HepG2 (cell line): ENCODE measurements at regions of chr4 and their contacts with region 1.

Region 1: GRCh38 chr4:1746265-1746691 is 25.0 kb downstream of the TACC3 start:
- DNase-seq: peak; percentile 82
- ATAC-seq: peak; percentile 78
- H3K4me3 ChIP-seq: peak overlapping the region; percentile 46 to 75 (median 67)
- H3K27ac ChIP-seq: peak overlapping the region; percentile 76
- H3K4me1 ChIP-seq: peaks cover 68% of the 10 kb centered on the region
- H3K27me3 ChIP-seq: no peaks in the 10 kb centered on the region; a peak in 1 of 5 replicates
- CTCF ChIP-seq: peak; percentile 99
- EP300 ChIP-seq: peak in 1 of 2 experiments; percentile 10; a peak in 1 of 4 replicates
- POLR2A ChIP-seq: no peak
- RAD21 ChIP-seq: peak; percentile 94

Region 2: DNA sequence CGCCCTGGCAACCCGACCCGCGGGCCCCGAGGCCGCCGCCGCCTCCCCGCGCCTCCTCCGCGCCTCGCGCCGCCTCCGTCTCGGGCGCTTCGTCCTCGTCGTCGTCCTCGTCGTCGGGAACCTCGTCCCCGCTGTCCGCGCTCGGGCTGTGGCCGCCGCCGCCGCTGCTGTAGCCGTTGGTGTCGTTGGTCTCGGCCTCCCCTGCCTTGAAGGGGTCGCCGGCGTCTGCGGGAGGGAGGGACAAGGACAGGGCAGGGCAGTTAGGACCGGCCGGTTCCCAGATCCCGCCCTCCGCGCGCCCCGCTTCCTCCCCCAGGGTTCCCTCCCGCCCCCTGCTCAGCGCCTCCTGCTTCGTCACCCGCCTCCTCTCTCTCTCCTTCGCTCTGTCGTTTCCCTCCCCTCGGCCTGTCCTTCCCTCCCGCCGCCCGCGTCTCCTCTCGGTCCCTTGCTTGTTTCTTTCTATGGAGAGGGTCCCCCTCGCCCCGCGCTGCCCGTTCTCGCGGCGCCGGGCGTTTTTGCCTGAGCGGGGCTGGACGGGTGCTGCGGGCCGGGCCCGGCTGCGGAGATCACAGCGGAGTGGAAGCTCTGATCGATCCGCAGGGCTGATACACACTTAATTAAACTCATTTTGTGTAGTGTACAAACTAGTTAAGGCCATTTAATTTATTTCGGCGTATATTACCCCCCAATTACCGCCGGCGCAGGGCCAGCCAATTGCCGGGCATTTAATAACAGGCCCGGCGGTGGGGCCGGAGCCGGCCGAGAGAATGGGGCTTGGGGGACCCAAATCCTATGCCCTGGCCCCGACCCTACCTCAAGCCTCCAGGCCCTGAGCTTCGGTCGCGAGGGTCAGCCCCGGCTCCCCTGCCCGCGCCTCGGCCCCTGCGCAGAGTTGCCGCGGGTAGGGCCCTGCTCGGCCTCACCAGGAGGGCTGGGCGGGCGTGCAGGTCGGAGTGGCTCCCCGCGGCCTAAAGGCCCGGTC is 342.4 kb before region 1 on chr4:
- CTCF ChIA-PET with region 1: no interaction called
- POLR2A ChIA-PET with region 1: no interaction called
- in situ Hi-C with region 1: no loop called
- intact Hi-C with region 1: no loop called
- DNase-seq: no peak
- ATAC-seq: no peak
- H3K4me3 ChIP-seq: no peak overlapping the region
- H3K27ac ChIP-seq: no peak overlapping the region
- H3K4me1 ChIP-seq: no peaks in the 10 kb centered on the region
- H3K27me3 ChIP-seq: peaks cover 4 to 27% of the 10 kb centered on the region in 2 experiments
- CTCF ChIP-seq: no peak
- EP300 ChIP-seq: no peak
- POLR2A ChIP-seq: no peak
- RAD21 ChIP-seq: no peak

Region 3: GRCh38 chr4:1767770-1768366 is 21.6 kb after region 1 on chr4:
- CTCF ChIA-PET with region 1: interaction called, 6 read pairs
- POLR2A ChIA-PET with region 1: interaction called, 70 read pairs
- in situ Hi-C with region 1: no loop called
- intact Hi-C with region 1: loop called (anchors 2 kb)
- DNase-seq: peak; percentile 76
- ATAC-seq: peak; percentile 20
- H3K4me3 ChIP-seq: peak overlapping the region; percentile 51 to 67 (median 59)
- H3K27ac ChIP-seq: peak overlapping the region; percentile 83
- H3K4me1 ChIP-seq: peaks cover 83% of the 10 kb centered on the region
- H3K27me3 ChIP-seq: no peaks in the 10 kb centered on the region
- CTCF ChIP-seq: peak; percentile 71
- EP300 ChIP-seq: no peak
- POLR2A ChIP-seq: no peak
- RAD21 ChIP-seq: no peak; the same call in 1 of the 2 replicates

Region 4: DNA sequence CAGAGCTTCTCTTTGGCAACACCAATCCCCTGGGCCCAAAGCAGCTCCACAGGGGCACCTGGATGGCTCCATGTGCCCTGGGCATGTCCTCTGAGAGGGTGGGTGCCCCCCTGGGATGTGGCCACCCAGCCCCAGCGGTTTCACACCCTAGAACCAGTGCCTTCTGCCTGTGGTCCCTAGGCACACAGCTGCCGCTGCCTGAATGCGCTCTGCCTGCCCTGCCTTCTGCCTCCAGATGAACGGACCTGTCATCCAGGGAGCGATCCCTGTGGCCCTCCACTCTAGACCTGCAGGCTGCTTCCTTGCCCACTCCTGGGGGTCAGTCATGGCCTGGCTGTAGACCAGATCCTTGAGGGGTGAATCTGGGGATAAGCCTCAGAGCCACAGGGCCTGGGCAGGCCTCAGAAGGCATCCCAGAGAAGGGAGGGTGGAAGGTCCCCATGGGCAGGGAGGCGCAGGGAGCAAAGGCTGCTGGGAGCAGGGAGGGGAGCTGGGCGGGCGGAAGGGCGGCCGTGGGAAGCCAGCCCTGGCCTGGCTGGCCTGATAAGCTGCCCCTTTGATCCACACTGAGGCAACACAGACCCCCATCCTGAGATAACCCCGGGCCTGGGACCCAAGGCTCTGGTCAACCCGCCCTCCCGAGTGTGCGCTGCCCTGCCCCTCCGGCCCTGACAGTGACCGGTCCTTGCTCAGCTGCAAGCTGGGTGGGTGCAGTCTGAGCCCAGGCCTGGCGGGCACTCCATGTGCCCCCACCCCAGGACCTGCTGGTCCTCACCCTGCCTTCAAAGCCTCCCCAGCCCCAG is 38.7 kb after region 1 on chr4:
- CTCF ChIA-PET with region 1: interaction called, 3 read pairs
- POLR2A ChIA-PET with region 1: interaction called, 19 read pairs
- in situ Hi-C with region 1: no loop called
- intact Hi-C with region 1: no loop called
- DNase-seq: peak; percentile 79
- ATAC-seq: peak; percentile 76
- H3K4me3 ChIP-seq: peak overlapping the region; percentile 29 to 62 (median 29); a peak in 5 of 6 replicates
- H3K27ac ChIP-seq: peak overlapping the region; percentile 69
- H3K4me1 ChIP-seq: peaks cover 96% of the 10 kb centered on the region
- H3K27me3 ChIP-seq: peaks cover 2% of the 10 kb centered on the region in 2 experiments; a peak in 3 of 5 replicates
- CTCF ChIP-seq: no peak
- EP300 ChIP-seq: peak in 1 of 2 experiments; percentile 85; a peak in 1 of 4 replicates
- POLR2A ChIP-seq: no peak
- RAD21 ChIP-seq: no peak

Region 5: GRCh38 chr4:1792832-1793495 is 46.7 kb after region 1 on chr4 and contains the start of gene FGFR3:
- CTCF ChIA-PET with region 1: interaction called, 3 read pairs
- POLR2A ChIA-PET with region 1: interaction called, 48 read pairs
- in situ Hi-C with region 1: no loop called
- intact Hi-C with region 1: loop called (anchors 5 kb)
- DNase-seq: peak; percentile 48
- ATAC-seq: peak; percentile 31
- H3K4me3 ChIP-seq: peak within 1 kb of the TSS; percentile 94 to 98 (median 95)
- H3K27ac ChIP-seq: peak within 1 kb of the TSS; percentile 92
- H3K4me1 ChIP-seq: peaks cover 71% of the 10 kb centered on the region
- H3K27me3 ChIP-seq: peaks cover 8 to 22% of the 10 kb centered on the region in 2 experiments; a peak in 4 of 5 replicates
- CTCF ChIP-seq: no peak
- EP300 ChIP-seq: no peak
- POLR2A ChIP-seq: peak in 1 of 2 experiments; percentile 82; a peak in 2 of 4 replicates
- RAD21 ChIP-seq: peak; percentile 30; the same call in 1 of the 2 replicates
- total RNA-seq, gene FGFR3: 40.2 and 103 TPM in 2 replicates

Region 6: GRCh38 chr4:1899149-1900086 is 153.1 kb after region 1 on chr4:
- CTCF ChIA-PET with region 1: interaction called, 8 read pairs
- POLR2A ChIA-PET with region 1: no interaction called
- in situ Hi-C with region 1: no loop called
- intact Hi-C with region 1: loop called (anchors 1 kb)
- DNase-seq: peak; percentile 70
- ATAC-seq: peak; percentile 93
- H3K4me3 ChIP-seq: no peak overlapping the region
- H3K27ac ChIP-seq: no peak overlapping the region
- H3K4me1 ChIP-seq: peaks cover 53% of the 10 kb centered on the region
- H3K27me3 ChIP-seq: no peaks in the 10 kb centered on the region
- CTCF ChIP-seq: peak; percentile 93
- EP300 ChIP-seq: no peak
- POLR2A ChIP-seq: no peak
- RAD21 ChIP-seq: peak; percentile 92

Region 7: DNA sequence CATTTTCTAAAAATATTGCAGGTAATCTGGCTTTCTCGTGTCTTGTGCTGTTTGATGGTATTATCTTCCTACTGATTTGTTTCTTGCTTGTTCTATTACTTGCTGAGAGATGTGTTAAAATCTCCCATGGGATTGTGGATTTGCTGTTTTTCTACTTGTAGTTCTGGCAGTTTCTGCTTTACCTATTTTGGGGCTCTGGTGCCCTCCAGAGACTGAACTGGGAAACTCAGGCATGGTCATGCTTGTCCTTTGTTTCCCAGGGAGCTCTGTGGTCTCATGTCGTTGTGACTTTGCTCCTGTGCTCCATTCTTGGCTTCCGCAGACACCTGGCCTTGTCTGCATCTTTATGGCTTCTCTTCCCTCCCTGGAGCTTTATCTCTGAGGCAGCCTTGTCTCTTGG is 164.4 kb after region 1 on chr4:
- CTCF ChIA-PET with region 1: no interaction called
- POLR2A ChIA-PET with region 1: interaction called, 4 read pairs
- in situ Hi-C with region 1: no loop called
- intact Hi-C with region 1: loop called (anchors 5 kb)
- DNase-seq: peak; percentile 55
- ATAC-seq: peak; percentile 88
- H3K4me3 ChIP-seq: no peak overlapping the region
- H3K27ac ChIP-seq: no peak overlapping the region
- H3K4me1 ChIP-seq: no peaks in the 10 kb centered on the region
- H3K27me3 ChIP-seq: no peaks in the 10 kb centered on the region
- CTCF ChIP-seq: peak; percentile 75
- EP300 ChIP-seq: no peak
- POLR2A ChIP-seq: no peak
- RAD21 ChIP-seq: peak; percentile 49; the same call in 1 of the 2 replicates

Region 8: DNA sequence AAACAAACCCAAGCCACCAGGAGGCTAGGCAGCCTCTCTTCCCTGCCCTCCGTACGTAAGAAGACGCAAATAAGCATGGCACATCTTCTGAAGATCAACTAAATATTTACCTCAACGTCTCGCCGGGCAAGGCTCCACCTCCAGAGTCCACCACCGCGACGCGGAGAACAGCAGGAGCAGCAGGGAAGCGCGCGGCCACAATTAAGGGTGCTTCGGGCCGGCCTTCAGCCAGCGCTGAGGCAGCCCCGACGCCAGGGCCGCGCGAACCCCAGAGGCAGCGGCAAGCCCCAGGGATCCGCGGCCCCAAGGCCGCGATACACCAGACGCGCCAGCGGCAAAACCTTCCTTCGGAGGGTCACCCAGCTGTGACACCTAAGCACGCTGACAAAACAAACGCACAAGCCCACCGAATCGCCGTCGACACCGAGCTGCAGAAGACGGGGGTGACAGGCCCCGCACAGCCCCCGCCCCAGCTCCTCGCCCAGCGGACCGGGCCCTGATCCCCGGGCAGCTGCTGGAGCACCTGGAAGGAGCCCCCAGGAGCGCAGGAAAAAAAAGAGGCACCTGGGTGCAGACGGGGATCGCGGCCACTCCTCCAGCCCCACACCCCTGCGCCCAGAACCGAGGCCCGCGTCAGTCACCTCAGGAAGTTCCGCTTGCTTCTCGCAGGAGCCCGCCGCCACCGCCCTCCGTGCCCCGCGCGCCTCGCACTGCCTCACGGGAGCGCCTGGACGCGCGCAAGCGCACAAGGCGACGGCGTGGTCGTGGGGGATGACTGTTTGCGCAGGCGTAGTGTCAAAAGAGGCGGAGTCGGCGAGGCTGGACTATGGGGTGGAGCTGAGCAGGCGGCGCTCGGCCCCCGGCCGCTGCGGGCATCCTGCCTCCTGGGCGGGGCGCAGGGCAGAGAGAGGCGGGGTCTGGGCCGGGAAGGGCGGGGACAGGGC is 495.4 kb after region 1 on chr4 and contains the starts of genes HAUS3 and POLN:
- CTCF ChIA-PET with region 1: no interaction called
- POLR2A ChIA-PET with region 1: no interaction called
- in situ Hi-C with region 1: no loop called
- intact Hi-C with region 1: no loop called
- DNase-seq: peak; percentile 90
- ATAC-seq: peak; percentile 87
- H3K4me3 ChIP-seq: peak within 1 kb of the TSS; percentile 67 to 93 (median 76)
- H3K27ac ChIP-seq: peak within 1 kb of the TSS; percentile 77
- H3K4me1 ChIP-seq: peaks cover 70% of the 10 kb centered on the region
- H3K27me3 ChIP-seq: no peaks in the 10 kb centered on the region
- CTCF ChIP-seq: no peak; the same call in 1 of the 2 replicates
- EP300 ChIP-seq: no peak
- POLR2A ChIP-seq: peak in 1 of 2 experiments; percentile 55; a peak in 1 of 4 replicates
- RAD21 ChIP-seq: no peak
- total RNA-seq, gene HAUS3: 12.6 and 16.3 TPM in 2 replicates
- total RNA-seq, gene POLN: 0.60 and 0.93 TPM in 2 replicates